Stomach (tissue), 19 donors: ENCODE measurements at regions of chr18 and their contacts with region 1.

Region 1: DNA sequence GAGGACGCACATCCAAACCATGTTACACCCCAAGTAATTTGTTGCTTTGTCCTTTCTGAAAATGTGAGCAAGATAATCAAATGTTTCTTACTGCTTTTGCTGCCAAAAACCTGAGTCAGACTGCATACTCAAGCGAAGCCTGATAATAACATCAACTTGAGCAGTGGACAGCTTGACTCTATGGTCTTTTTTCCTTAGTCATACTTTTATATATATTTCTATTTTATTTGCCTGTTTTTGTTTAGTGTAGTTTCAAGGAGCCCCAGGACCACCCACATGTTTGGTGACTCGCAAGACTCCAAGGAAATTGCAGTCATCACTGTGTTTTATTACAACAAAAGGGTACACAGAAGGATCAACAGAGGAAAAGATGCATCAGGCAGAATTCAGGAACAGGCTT is 688.4 kb upstream of the PIK3C3 start:
- DNase-seq: peak in 1 of 2 donors; percentile 11
- H3K4me3 ChIP-seq: no peak overlapping the region
- H3K27ac ChIP-seq: no peak overlapping the region
- H3K4me1 ChIP-seq: peaks cover 0 to 28% (median 8%) of the 10 kb centered on the region in 4 donors
- H3K27me3 ChIP-seq: no peaks in the 10 kb centered on the region
- CTCF ChIP-seq: no peak
- EP300 ChIP-seq: no peak
- POLR2A ChIP-seq: no peak

Region 2: DNA sequence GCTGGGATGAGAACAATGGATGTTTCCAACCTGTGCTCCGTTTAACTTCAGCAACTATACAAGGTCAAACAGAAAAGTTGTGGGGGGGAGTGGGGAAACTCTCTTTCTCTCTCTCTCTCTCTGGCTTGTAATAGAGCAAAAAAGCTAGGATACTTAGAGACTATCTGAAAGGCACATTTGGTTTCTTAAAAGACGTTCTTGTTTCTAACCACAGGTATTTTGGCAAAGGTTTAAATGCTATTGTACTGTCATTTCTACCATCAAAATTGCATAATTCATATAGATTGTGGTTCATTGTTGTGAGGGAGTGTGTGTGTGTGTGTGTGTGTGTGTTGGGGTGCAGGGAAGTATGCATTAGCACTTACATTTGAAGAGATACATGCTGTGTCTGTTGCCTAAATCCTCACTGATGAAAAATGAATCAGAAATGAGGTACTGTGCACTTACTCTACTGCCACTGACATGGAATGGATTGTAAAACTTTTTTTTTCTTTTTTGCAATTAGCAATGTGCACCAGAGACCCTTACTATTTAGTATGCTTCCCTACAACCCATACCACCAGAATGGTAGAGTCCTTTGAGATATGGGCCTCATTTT is 152.6 kb before region 1 on chr18:
- intact Hi-C with region 1: loop called (anchors 10 kb)
- DNase-seq: no peak
- H3K4me3 ChIP-seq: no peak overlapping the region
- H3K27ac ChIP-seq: no peak overlapping the region
- H3K4me1 ChIP-seq: no peaks in the 10 kb centered on the region
- H3K27me3 ChIP-seq: no peaks in the 10 kb centered on the region
- CTCF ChIP-seq: no peak
- EP300 ChIP-seq: no peak
- POLR2A ChIP-seq: no peak